ENCODE measurements at regions of chr3 and their contacts with region 1.

Region 1: DNA sequence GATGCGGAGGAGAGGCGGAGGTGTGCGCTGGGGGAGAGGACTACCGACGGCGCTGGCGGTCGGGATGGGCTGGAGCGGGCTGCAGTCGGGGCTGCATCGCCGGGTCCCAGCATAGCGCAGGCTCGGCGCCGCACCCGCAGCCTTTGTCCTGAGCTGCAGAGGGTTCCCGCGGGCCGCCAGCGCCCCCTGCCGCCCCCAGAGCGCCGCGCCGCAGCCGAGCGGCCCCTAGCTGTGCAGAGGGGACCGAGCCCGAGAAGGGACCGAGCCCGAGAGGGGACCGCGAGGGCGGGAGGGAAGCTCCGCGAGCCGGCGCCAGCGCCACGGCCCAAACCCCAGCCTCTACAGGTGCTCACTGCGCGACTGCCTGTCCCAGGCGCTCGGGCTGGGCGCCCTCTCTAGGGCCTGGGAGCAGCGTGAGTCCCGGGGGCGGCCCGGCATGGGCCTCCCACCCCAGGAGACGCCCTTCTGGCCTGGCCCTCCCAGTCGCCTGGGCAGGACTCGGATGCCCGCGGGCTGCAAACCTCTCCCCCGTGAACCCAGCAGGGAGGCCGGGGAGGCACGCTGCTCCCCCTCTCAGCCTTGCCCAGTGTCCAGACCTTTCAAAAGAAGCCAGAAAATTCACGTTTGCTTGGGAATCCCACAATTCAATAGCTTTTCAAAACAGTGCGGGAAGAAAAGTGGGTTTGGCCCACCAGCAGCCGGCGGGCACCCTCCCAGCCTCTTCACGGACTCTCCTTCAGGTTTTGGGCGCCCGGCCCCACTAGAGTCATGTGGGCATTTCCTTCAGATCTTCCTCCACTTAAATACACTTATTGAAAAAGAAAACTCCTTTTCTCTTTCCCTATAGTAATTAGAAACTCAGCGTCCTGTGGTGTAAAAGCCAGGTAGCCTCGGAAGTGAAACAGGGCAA is 134.7 kb downstream of the TPRA1 start:
- DNase-seq: peak; percentile 81
- H3K4me3 ChIP-seq: peak overlapping the region; percentile 27
- H3K27ac ChIP-seq: no peak overlapping the region
- H3K4me1 ChIP-seq: peaks cover 4% of the 10 kb centered on the region
- H3K27me3 ChIP-seq: peaks cover 56% of the 10 kb centered on the region
- CTCF ChIP-seq: peak; percentile 76

Region 2: GRCh38 chr3:126156477-126156876 is 1299.3 kb before region 1 on chr3:
- CTCF ChIA-PET with region 1: no interaction called
- POLR2A ChIA-PET with region 1: no interaction called
- intact Hi-C with region 1: no loop called
- DNase-seq: no peak
- H3K4me3 ChIP-seq: no peak overlapping the region
- H3K27ac ChIP-seq: no peak overlapping the region
- H3K4me1 ChIP-seq: no peaks in the 10 kb centered on the region
- H3K27me3 ChIP-seq: no peaks in the 10 kb centered on the region
- CTCF ChIP-seq: no peak

Region 3: DNA sequence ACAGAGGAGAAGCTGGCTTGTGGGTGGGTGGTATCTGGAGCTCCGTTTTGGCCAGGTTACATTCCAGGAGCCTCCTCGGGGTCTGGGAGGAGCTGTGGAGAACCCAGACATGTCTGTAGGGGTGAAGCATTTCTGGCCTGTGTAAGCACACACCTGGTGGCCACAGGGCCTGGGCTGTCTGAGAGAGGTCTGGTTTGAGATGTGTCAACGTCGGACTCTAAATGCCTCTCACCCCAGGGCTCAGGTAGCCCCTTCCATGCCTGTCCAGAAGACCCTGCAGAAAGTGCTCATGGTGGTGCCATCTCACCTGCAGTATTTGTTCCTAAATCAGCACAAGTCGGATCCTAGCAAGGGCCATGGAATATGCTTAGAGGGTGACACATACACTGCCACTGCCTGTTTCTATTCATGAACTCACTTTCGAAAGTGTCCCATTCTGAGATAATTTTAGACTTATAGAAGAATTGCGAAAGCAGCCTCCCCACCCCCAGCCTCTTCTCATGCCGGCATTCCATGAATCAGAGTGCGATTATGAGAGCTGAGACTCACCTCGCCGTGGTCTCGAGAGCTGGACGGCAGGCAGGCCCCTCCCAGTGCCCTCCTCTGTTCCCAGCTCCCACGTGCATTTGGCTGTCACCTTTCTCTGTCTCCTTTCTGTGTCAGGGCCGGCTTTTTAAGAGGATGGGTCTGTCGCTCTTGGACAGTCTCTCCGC is 1162.3 kb before region 1 on chr3:
- CTCF ChIA-PET with region 1: interaction called, 12 read pairs
- POLR2A ChIA-PET with region 1: no interaction called
- intact Hi-C with region 1: no loop called
- DNase-seq: peak; percentile 62
- H3K4me3 ChIP-seq: no peak overlapping the region
- H3K27ac ChIP-seq: peak overlapping the region; percentile 99
- H3K4me1 ChIP-seq: peaks cover 51% of the 10 kb centered on the region
- H3K27me3 ChIP-seq: no peaks in the 10 kb centered on the region
- CTCF ChIP-seq: no peak

Region 4: DNA sequence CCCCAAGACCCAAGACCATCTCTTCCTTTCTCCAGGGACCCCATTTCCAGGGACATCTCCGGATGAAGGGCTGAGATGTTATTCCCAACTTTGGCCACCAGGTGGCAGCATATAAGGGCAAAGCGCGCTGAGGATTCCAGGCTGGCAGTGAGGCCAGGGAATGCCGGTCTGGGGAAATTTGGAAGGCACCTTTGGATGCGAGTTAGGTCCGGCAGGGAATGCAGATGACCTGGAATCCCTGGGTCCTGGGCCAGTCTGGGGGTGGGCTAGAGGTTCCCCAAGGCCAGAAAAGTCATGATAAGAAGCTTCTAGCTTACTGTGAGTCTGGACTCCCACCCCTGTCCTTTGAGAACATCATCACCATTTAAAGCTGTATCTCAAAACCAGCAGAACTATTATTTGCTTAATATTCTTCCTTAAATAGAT is 933.4 kb before region 1 on chr3:
- CTCF ChIA-PET with region 1: interaction called, 3 read pairs
- POLR2A ChIA-PET with region 1: no interaction called
- intact Hi-C with region 1: loop called (anchors 5 kb)
- DNase-seq: peak; percentile 73
- H3K4me3 ChIP-seq: no peak overlapping the region
- H3K27ac ChIP-seq: no peak overlapping the region
- H3K4me1 ChIP-seq: peaks cover 6% of the 10 kb centered on the region
- H3K27me3 ChIP-seq: peaks cover 6% of the 10 kb centered on the region
- CTCF ChIP-seq: peak; percentile 83

Region 5: GRCh38 chr3:126679318-126679751 is 776.5 kb before region 1 on chr3:
- CTCF ChIA-PET with region 1: interaction called, 3 read pairs
- POLR2A ChIA-PET with region 1: no interaction called
- intact Hi-C with region 1: loop called (anchors 1 kb)
- DNase-seq: peak; percentile 81
- H3K4me3 ChIP-seq: peak overlapping the region; percentile 7
- H3K27ac ChIP-seq: no peak overlapping the region
- H3K4me1 ChIP-seq: peaks cover 20% of the 10 kb centered on the region
- H3K27me3 ChIP-seq: no peaks in the 10 kb centered on the region
- CTCF ChIP-seq: peak; percentile 95

Region 6: DNA sequence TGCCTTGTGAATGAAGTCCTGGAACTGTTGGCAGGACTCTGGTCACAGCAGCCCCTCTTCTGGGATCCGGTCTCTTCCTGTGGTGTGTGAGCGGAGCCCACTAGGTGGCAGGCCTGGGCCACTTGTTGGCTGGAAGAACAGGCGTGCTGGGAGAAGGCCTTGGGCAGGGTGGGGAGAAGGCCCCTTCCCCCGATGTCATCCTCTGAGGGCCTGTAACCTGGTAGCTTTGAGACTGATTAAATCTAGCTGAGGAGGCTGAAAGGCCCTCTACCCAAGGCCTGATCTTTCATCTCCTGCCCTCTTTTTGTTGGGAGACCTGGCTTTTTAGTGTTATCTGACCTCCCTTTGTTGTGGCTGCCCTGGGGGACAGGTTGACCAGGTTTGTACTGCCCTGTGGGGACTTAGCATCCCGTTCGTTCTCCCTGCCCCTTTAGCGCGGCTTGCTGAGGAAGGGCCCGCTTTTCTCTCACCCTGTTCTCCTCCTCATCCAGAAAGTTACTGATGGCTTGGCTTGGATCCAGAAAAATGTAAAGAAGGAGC is 703.4 kb before region 1 on chr3:
- CTCF ChIA-PET with region 1: no interaction called
- POLR2A ChIA-PET with region 1: no interaction called
- intact Hi-C with region 1: loop called (anchors 5 kb)
- DNase-seq: peak; percentile 84
- H3K4me3 ChIP-seq: no peak overlapping the region
- H3K27ac ChIP-seq: no peak overlapping the region
- H3K4me1 ChIP-seq: no peaks in the 10 kb centered on the region
- H3K27me3 ChIP-seq: no peaks in the 10 kb centered on the region
- CTCF ChIP-seq: peak; percentile 93

Region 7: GRCh38 chr3:126982471-126983175 is 473.2 kb before region 1 on chr3 and contains the start of gene PLXNA1:
- CTCF ChIA-PET with region 1: interaction called, 3 read pairs
- POLR2A ChIA-PET with region 1: no interaction called
- intact Hi-C with region 1: loop called (anchors 5 kb)
- DNase-seq: peak; percentile 88
- H3K4me3 ChIP-seq: peak within 1 kb of the TSS; percentile 77
- H3K27ac ChIP-seq: peak within 1 kb of the TSS; percentile 79
- H3K4me1 ChIP-seq: peaks cover 21% of the 10 kb centered on the region
- H3K27me3 ChIP-seq: no peaks in the 10 kb centered on the region
- CTCF ChIP-seq: peak; percentile 93
- total RNA-seq, gene PLXNA1: 33.6 and 38.4 TPM in 2 replicates